ENCODE measurements at regions of chr22 and their contacts with region 1.

Region 1: GRCh38 chr22:29553351-29554224 is at the start of gene THOC5:
- DNase-seq: peak; percentile 70 to 90
- H3K4me3 ChIP-seq: peak within 1 kb of the TSS; percentile 62 to 98 (median 80)
- H3K27ac ChIP-seq: peak within 1 kb of the TSS; percentile 64; the same call in 1 of the 2 replicates
- H3K4me1 ChIP-seq: no peaks in the 10 kb centered on the region
- H3K27me3 ChIP-seq: no peaks in the 10 kb centered on the region
- CTCF ChIP-seq: peak; percentile 31 to 68 (median 31); a peak in 3 of 4 replicates
- EP300 ChIP-seq: peak in 1 of 2 experiments; percentile 16; a peak in 1 of 3 replicates
- POLR2A ChIP-seq: peak in 1 of 2 experiments; percentile 95; a peak in 2 of 3 replicates
- RAD21 ChIP-seq: no peak
- total RNA-seq, gene THOC5: 61.5 and 65.7 TPM in 2 replicates

Region 2: GRCh38 chr22:29563652-29564460 is 10.3 kb after region 1 on chr22:
- CTCF ChIA-PET with region 1: interaction called, 17 read pairs
- POLR2A ChIA-PET with region 1: interaction called, 43 read pairs
- DNase-seq: no peak
- H3K4me3 ChIP-seq: no peak overlapping the region
- H3K27ac ChIP-seq: no peak overlapping the region
- H3K4me1 ChIP-seq: no peaks in the 10 kb centered on the region
- H3K27me3 ChIP-seq: no peaks in the 10 kb centered on the region
- CTCF ChIP-seq: no peak
- EP300 ChIP-seq: no peak
- POLR2A ChIP-seq: no peak
- RAD21 ChIP-seq: no peak

Region 3: GRCh38 chr22:29569011-29569678 is 15.6 kb after region 1 on chr22:
- CTCF ChIA-PET with region 1: interaction called, 17 read pairs
- POLR2A ChIA-PET with region 1: interaction called, 43 read pairs
- DNase-seq: no peak
- H3K4me3 ChIP-seq: no peak overlapping the region
- H3K27ac ChIP-seq: no peak overlapping the region
- H3K4me1 ChIP-seq: no peaks in the 10 kb centered on the region
- H3K27me3 ChIP-seq: no peaks in the 10 kb centered on the region
- CTCF ChIP-seq: no peak
- EP300 ChIP-seq: no peak
- POLR2A ChIP-seq: no peak
- RAD21 ChIP-seq: no peak

Region 4: DNA sequence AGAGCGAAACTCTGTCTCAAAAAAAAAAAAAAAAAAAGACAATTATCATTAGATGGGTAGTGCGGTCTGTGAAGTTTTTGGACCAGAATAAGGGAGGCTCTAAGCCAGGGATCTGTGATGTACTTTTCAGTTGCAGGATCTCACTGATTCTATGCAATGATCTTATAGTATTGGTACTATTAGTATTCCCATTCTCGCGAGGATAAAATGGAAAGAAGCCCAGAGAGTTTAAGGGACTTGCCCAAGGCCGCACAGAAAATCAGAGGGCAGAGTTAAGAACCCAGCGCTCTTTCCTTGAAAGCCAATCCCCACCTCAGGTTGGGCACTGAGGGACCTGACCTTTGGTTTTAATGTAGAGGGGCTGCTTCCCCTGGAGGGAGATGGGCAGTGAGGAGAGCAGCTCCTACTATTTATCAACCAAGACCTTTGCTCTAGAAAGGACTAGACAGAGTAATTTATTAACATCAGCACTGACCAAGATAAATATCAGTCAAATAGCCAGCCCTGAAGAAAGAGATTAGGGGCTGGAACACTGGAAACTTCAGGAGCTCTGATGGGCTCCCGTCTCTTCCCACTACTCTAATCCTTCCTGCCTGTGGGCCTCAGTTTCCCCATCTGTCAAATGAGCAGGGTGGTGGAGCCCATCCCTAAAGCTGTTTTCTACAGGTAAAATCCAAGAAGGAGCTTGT is 21.3 kb after region 1 on chr22:
- CTCF ChIA-PET with region 1: interaction called, 6 read pairs
- POLR2A ChIA-PET with region 1: interaction called, 21 read pairs
- DNase-seq: no peak
- H3K4me3 ChIP-seq: no peak overlapping the region
- H3K27ac ChIP-seq: no peak overlapping the region
- H3K4me1 ChIP-seq: peaks cover 0 to 5% (median 4%) of the 10 kb centered on the region in 4 experiments; a peak in 6 of 7 replicates
- H3K27me3 ChIP-seq: no peaks in the 10 kb centered on the region
- CTCF ChIP-seq: no peak
- EP300 ChIP-seq: no peak
- POLR2A ChIP-seq: no peak
- RAD21 ChIP-seq: no peak

Region 5: DNA sequence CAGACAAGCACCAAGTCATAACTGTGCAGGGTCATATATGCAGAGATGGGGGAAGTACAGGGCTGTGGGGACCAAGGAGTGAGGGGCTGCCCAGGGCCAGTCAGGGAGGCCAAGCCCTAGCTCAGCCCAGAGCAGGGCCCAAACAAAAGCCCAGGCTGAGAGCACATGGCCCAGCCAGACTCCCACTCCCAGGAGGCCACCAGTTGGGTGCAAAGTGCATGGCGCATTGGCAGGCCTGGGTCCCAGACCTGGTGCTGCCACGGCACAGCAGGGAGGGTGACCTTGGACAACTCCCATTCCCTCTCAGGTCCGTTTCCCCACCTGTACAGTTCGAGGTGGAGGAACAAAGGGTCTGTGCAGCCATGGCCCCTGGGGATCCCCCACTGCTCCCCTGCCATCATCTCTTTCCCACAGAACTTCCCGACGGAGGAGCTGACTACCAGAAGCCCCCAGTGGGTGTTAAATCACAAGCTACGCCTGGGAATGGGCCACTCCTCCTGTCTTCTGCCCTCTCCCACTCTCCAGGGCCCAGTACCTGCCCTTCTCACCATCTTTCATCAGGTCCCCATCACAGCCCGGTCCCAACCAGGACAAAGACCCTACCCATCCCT is 26.7 kb after region 1 on chr22:
- CTCF ChIA-PET with region 1: interaction called, 3 read pairs
- POLR2A ChIA-PET with region 1: interaction called, 20 read pairs
- DNase-seq: peak in 1 of 2 experiments; percentile 63
- H3K4me3 ChIP-seq: peak overlapping the region; percentile 74 to 92 (median 85)
- H3K27ac ChIP-seq: peak overlapping the region; percentile 96
- H3K4me1 ChIP-seq: peaks cover 0 to 13% (median 9%) of the 10 kb centered on the region in 4 experiments; a peak in 6 of 7 replicates
- H3K27me3 ChIP-seq: no peaks in the 10 kb centered on the region
- CTCF ChIP-seq: no peak
- EP300 ChIP-seq: no peak
- POLR2A ChIP-seq: peak in 1 of 2 experiments; percentile 85; a peak in 2 of 3 replicates
- RAD21 ChIP-seq: no peak

Region 6: DNA sequence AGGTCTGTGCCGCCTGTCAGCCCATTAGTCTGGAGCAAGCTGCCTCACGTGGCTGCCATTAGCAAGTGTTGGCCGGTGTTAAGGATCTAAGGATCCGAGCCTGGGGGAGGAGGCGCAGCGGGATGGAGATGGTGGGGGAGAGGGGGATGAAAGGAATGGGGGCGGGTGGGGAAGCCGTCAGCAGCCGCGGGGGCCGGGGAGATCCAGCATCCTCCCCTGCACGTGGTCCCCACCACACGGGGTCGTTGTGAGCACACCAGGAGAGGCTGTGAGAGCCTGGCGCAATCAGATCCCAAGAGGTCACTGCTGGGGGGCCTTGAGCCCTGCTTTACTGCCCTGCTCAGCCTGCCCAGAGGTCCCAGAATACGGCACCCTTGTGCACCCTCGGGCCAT is 173.5 kb after region 1 on chr22:
- CTCF ChIA-PET with region 1: no interaction called
- POLR2A ChIA-PET with region 1: no interaction called
- DNase-seq: peak in 1 of 2 experiments; percentile 79
- H3K4me3 ChIP-seq: no peak overlapping the region
- H3K27ac ChIP-seq: no peak overlapping the region
- H3K4me1 ChIP-seq: peaks cover 0 to 6% (median 4%) of the 10 kb centered on the region in 4 experiments; a peak in 6 of 7 replicates
- H3K27me3 ChIP-seq: peaks cover 0 to 9% (median 3%) of the 10 kb centered on the region in 4 experiments; a peak in 4 of 7 replicates
- CTCF ChIP-seq: peak; percentile 42 to 62 (median 45)
- EP300 ChIP-seq: no peak
- POLR2A ChIP-seq: no peak
- RAD21 ChIP-seq: peak; percentile 55 to 63

Region 7: DNA sequence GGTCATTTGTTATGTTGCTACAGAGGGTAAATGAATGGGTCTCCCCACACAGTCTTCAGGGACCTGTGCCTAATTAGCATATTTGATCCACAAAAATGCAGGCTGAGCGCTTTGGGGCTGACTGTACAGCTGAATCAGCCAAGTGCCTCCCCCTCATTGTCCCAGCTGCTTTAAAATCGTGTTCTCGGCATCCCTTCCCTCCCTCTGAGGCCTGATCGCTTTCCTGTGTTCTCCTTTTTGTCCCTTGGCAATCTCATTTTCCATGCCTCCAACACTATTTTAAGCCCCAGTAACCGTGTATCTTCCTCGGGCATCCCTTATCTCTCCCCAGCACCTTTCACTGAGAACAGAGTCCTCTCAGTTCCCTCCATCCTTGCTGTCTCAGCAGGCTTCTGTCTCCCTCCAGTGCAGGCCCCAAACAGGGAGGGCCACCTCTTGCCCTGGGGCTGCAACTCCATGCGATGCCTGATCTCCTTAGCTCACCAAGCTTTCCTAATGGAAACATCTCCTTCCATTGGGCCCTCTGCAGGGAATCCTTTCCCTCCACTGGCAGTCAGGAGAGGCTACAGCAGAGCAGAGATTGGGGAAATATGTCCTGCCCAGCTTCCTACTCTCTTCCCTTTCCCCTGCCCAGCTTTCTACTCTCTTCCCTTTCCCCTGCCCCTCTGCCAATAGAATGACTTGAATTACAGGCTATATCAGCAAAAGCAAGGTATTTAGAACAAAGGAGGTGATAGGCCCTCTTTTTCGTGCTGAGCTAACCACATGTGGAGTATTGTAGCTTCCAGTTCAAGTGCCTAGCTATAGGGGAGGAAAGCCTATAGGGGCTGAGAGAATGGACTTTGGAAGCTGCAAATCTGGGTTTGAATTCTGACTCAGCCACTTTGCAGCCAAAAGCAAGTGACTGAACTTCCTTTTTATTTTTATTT is 227.4 kb after region 1 on chr22:
- CTCF ChIA-PET with region 1: no interaction called
- POLR2A ChIA-PET with region 1: no interaction called
- DNase-seq: no peak
- H3K4me3 ChIP-seq: no peak overlapping the region
- H3K27ac ChIP-seq: no peak overlapping the region
- H3K4me1 ChIP-seq: 0 out of 7 replicates have a peak, but pooled peaks cover 0 to 2% (median 0%) of the 10 kb centered on the region in 4 experiments
- H3K27me3 ChIP-seq: no peaks in the 10 kb centered on the region
- CTCF ChIP-seq: no peak
- EP300 ChIP-seq: no peak
- POLR2A ChIP-seq: no peak
- RAD21 ChIP-seq: no peak